OCI-LY7 (cell line): ENCODE measurements at regions of chr1 and their contacts with region 1.

Region 1: DNA sequence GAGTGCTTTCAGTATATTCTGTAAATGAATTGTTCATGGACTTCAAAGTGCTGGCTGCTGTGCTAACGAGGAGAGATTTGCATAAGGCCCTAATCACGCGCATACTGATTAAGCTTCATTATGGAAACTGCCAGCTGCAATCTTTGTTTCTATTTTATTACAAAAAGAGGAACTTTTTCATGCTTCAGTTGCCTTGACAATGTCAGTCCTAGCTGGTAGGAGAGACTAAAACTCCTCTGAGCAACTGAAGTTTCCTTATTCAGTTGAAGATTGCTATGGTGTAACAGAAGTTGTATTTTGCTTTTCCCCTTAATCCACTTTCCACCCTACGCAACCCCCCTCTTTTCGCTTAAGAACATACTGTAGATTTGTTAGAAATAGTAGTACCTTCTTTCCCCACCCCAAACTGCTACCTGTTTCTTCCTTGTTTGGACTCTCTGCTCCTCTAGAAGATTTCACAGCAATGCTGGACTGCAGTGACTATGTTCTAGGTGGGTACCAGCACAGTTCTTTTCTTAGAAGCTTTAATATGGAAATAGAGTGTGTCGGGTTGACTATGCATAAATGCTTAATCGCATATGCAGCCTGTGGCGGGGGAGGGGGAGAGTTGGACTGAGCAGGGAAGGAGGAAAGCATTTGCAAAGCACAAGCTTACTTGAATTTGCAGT is 108.3 kb downstream of the POU2F1 start:
- DNase-seq: peak; percentile 98
- H3K4me3 ChIP-seq: peak overlapping the region; percentile 79
- H3K27ac ChIP-seq: peak overlapping the region; percentile 99
- H3K4me1 ChIP-seq: peaks cover 42% of the 10 kb centered on the region
- CTCF ChIP-seq: no peak

Region 2: GRCh38 chr1:167263819-167264464 is 65.0 kb before region 1 on chr1:
- CTCF ChIA-PET with region 1: interaction called, 8 read pairs
- POLR2A ChIA-PET with region 1: interaction called, 6 read pairs
- intact Hi-C with region 1: loop called (anchors 2 kb)
- DNase-seq: peak; percentile 27
- H3K4me3 ChIP-seq: no peak overlapping the region
- H3K27ac ChIP-seq: no peak overlapping the region
- H3K4me1 ChIP-seq: peaks cover 32% of the 10 kb centered on the region
- CTCF ChIP-seq: no peak

Region 3: DNA sequence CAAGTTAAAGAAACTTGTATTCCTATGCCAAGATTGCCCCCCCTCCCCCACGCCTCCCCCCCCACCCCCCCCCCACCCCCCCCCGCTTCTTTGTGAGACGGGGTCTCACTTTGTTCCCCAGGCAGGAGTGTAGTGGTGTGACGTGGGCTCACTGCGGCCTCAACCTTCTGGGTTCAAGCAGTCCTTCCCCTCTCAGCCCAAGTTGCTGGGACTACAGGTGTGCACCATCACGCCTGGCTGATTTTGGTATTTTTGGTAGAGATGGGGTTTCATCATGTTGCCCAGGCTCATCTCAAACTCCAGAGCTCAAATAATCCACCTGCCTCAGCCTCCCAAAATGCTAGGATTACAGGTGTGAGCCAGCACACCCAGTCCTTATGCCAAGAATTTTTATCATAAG is 28.4 kb after region 1 on chr1:
- CTCF ChIA-PET with region 1: no interaction called
- POLR2A ChIA-PET with region 1: interaction called, 19 read pairs
- intact Hi-C with region 1: loop called (anchors 1 kb)
- DNase-seq: peak; percentile 95
- H3K4me3 ChIP-seq: peak overlapping the region; percentile 57
- H3K27ac ChIP-seq: peak overlapping the region; percentile 100
- H3K4me1 ChIP-seq: peaks cover 83% of the 10 kb centered on the region
- CTCF ChIP-seq: no peak

Region 4: DNA sequence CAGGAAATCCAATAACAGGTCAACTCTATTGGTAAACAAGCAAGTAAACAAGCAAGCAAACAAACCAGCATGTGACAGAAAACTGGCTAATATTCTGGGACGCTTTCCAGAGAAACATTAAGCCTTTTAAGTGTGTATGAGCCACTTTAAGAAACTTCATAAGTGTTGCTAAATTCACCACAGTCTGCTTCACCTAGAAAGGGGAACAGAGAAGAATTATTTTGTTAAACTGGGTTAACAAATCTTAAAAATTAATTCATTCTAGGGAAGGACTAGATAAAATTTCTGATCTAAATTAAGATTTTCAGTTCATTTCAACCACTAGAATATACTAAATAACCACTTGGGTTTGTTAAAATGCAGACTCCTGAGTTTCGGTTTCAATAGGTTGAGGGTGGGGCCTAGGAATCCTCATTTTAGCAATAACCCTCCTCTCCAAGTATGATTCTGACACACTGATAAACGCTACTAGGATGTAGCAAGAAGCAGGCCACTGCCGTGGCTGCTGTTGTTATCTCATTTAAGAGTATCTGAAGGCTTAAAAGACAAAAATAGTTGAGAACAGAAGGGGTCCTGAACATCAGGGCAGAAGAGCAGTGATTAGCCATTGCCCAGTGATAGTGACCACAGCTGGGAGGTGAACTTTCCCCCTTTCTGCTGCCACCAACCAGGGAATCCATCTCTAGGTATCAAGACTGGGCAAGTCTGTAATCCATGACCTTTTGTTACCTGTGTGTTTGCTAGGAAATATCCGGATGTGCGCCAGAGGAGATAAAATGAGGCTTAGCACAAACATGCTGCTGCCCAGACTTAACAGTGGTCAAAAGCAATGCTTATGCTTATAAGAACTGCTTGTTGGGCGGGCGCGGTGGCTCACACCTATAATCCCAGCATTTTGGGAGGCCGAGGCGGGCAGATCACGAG is 213.4 kb after region 1 on chr1:
- CTCF ChIA-PET with region 1: no interaction called
- POLR2A ChIA-PET with region 1: no interaction called
- intact Hi-C with region 1: loop called (anchors 5 kb)
- DNase-seq: peak; percentile 45
- H3K4me3 ChIP-seq: peak overlapping the region; percentile 39
- H3K27ac ChIP-seq: peak overlapping the region; percentile 76
- H3K4me1 ChIP-seq: peaks cover 80% of the 10 kb centered on the region
- CTCF ChIP-seq: no peak

Region 5: DNA sequence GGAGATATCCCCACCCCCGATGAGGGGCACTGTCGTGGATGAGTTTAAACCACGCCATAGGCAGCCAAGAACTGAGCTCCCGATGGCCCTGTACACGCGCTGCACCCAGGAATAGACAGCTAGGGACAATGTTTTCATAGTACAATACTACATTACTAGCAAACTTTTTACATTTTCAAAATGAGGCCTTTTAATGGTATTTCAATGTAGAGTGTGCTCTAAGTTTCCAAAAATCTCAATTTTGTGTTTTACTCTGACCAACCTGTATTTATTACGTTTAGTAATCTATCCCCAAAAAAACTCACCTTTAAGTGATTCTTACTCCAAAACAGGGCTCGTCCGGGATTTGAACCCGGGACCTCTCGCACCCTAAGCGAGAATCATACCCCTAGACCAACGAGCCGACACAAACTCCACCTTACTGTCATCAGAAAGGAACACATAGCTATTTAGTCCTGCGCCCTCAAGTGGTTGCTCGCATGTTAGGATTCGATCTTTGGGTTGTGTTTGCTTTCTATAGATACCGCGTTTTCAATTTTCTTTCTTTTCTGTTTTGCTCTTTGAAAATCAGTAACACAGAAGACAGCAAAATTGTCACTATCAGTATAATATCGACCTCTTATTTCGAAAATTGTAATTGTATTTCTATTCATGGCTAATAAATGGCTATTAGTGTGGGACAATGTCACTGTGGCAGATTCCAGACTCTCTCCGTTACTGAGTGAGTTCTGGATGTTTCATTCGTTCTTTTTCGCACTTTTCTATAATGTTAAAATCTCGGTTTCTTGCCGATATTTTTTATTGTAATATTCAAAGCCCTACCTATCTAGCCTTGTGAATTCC is 386.4 kb after region 1 on chr1:
- CTCF ChIA-PET with region 1: no interaction called
- POLR2A ChIA-PET with region 1: no interaction called
- intact Hi-C with region 1: loop called (anchors 5 kb)
- DNase-seq: peak; percentile 94
- H3K4me3 ChIP-seq: peak overlapping the region; percentile 75
- H3K27ac ChIP-seq: peak overlapping the region; percentile 73
- H3K4me1 ChIP-seq: peaks cover 47% of the 10 kb centered on the region
- CTCF ChIP-seq: peak; percentile 94